Heart right ventricle (tissue), 16 donors: ENCODE measurements at regions of chr12 and their contacts with region 1.

Region 1: DNA sequence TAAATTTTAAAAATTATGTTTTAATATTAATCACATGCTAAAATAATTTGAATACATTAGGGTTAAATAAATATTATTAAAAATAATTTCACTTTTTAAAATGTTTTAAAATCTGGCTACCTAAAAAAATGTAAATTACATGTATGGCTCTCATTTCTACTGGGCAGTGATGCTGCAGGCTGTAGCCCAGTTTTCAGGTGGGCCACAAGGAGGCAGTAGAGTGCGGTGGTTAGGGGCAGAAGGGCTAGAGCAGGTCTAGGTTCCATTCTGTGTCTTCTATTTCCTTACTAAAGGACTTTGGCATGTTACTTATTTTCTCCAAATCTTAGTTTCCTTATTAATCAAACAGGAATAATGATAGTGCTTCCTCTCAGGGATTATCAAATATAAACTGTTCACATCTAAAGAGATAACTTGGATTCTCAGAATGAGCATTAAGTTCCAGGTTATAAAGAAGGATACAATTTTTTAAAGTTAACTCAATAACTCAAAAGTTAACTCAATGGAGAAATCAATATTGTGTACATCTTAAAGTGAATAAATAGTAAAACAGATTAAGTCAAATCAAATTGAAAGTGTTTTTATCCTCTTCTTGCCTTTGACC is 54.9 kb upstream of the OVCH1 start:
- DNase-seq: peak; percentile 74 to 75
- ATAC-seq: peak; percentile 80 to 96 (median 92)
- H3K4me3 ChIP-seq: no peak overlapping the region
- H3K27ac ChIP-seq: peak overlapping the region in 4 of 10 donors; percentile 3 to 56 (median 26)
- H3K4me1 ChIP-seq: peaks cover 0 to 23% (median 14%) of the 10 kb centered on the region in 9 donors
- H3K27me3 ChIP-seq: no peaks in the 10 kb centered on the region
- CTCF ChIP-seq: peak; percentile 74 to 98 (median 94)

Region 2: DNA sequence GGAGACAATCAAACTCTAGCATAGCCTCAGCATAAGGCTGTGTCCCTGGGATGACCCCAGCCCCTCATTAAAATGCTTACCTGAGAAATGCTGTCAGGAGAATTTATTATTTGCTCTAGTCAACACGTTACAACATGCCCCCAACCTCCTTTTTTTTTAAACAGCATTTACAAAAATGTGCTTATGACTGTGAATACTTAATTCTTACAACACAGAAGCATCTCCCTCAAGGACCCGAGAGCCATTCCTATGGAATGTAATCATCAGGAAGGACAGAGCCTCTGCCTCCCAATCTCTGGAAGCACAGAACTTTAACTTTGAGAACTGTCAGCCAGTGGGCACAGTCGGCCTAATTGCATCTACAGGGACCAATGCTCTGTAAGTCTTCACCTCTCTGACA is 81.6 kb after region 1 on chr12:
- intact Hi-C with region 1: loop called in 1 of 10 experiments (anchors 10 kb)
- DNase-seq: no peak
- ATAC-seq: no peak
- H3K4me3 ChIP-seq: no peak overlapping the region
- H3K27ac ChIP-seq: no peak overlapping the region
- H3K4me1 ChIP-seq: peaks cover 0 to 9% (median 0%) of the 10 kb centered on the region in 9 donors
- H3K27me3 ChIP-seq: no peaks in the 10 kb centered on the region
- CTCF ChIP-seq: no peak

Region 3: DNA sequence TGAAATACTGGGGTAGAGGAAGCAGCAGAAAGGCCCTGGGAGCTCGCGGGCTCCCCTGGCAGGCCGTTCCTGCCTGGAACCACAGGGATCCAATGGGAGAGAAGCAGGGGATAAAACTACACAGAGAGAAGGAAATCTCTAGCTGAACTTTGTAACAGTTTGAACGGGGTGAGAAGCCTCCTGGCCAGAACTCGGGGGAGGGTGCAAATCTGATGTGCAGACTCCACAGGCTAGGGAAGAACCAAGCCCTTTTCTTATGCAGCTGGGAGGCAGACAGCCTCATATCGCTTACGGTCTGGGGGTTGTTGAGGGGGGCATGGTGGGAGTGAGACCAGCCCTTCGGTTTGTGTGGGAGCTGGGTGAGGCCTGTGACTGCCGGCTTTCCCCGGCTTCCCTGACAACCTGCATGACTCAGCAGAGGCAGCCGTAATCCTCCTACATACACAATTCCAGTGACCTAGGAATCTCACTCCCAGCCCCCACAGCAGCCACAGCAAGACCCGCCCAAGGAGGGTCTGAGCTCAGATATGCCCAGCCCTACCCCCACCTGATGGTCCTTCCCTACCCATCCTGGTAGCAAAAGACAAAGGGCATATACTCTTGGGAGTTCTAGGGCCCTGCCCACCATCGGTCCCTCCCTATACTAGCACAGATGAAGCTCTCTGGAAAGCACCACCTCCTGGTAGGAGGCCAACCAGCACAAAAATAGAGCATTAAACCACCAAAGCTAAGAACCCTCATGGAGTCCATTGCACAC is 88.3 kb after region 1 on chr12:
- intact Hi-C with region 1: loop called in 2 of 10 experiments (anchors 2 to 10 kb)
- DNase-seq: peak; percentile 40 to 66
- ATAC-seq: peak; percentile 58 to 90 (median 72)
- H3K4me3 ChIP-seq: peak overlapping the region in 3 of 10 donors; percentile 5 to 20 (median 12)
- H3K27ac ChIP-seq: peak overlapping the region in 9 of 10 donors; percentile 46 to 84 (median 70)
- H3K4me1 ChIP-seq: peaks cover 0 to 27% (median 20%) of the 10 kb centered on the region in 9 donors
- H3K27me3 ChIP-seq: no peaks in the 10 kb centered on the region
- CTCF ChIP-seq: peak in 3 of 9 donors; percentile 11 to 47 (median 26)

Region 4: DNA sequence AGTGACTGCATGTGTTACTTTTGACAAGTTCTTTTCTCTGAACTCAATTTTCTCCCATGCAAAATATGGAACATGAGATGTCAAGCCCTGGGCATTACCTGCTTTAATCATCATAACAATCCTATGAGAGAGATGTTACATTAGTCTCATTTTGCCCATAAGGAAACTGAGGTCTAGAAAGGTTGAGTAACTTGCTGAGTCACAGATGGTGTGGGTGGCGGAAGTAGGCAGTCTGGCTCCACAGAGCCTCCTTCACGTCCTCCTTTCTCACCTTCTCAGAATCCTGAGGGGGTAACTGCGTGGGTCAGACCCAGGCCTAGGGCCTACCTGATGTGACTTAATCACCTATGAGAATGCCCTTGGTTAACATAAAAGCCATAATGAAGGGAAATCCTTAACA is 180.6 kb after region 1 on chr12:
- intact Hi-C with region 1: loop called in 1 of 10 experiments (anchors 10 kb)
- DNase-seq: no peak
- ATAC-seq: no peak
- H3K4me3 ChIP-seq: no peak overlapping the region
- H3K27ac ChIP-seq: peak overlapping the region in 7 of 10 donors; percentile 0 to 66 (median 57)
- H3K4me1 ChIP-seq: peaks cover 24 to 92% (median 80%) of the 10 kb centered on the region in 9 donors
- H3K27me3 ChIP-seq: no peaks in the 10 kb centered on the region
- CTCF ChIP-seq: no peak

Region 5: GRCh38 chr12:29889737-29890136 is 337.3 kb after region 1 on chr12:
- intact Hi-C with region 1: loop called in 5 of 10 experiments (anchors 5 to 10 kb)
- DNase-seq: peak in 1 of 2 donors; percentile 75
- ATAC-seq: peak in 2 of 8 donors; percentile 41 to 48
- H3K4me3 ChIP-seq: no peak overlapping the region
- H3K27ac ChIP-seq: no peak overlapping the region
- H3K4me1 ChIP-seq: no peaks in the 10 kb centered on the region
- H3K27me3 ChIP-seq: no peaks in the 10 kb centered on the region
- CTCF ChIP-seq: peak; percentile 35 to 72 (median 62)